ENCODE measurements at regions of chr1 and their contacts with region 1.

Region 1: GRCh38 chr1:205983925-205984725 is 19.1 kb downstream of the RAB7B start:
- DNase-seq: peak; percentile 97
- H3K4me3 Mint-ChIP-seq: no peak overlapping the region
- H3K27ac Mint-ChIP-seq: peak overlapping the region; percentile 40
- H3K4me1 Mint-ChIP-seq: peaks cover 23% of the 10 kb centered on the region
- H3K27me3 Mint-ChIP-seq: no peaks in the 10 kb centered on the region
- CTCF ChIP-seq: peak; percentile 99

Region 2: DNA sequence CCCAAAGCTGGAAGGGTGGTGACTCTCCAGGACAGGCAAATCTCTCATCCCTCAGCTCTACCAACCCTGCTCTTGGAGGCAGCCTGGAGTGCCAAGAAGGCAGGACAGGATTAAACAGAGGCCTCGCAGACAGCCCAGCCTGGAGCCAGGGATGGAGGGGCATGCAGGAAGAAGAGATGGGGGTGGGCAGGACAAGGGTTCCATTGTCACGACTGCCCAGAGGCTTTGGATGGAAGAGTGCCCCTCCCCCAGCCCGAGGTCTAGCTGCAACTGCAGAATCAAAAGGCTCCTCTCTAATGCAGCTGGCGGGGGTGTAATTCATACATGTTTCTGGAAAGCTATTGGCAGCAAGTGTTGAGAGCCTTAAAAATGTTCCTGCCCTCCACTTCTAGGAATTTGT is 10.2 kb after region 1 on chr1:
- CTCF ChIA-PET with region 1: interaction called, 65 read pairs
- POLR2A ChIA-PET with region 1: interaction called, 89 read pairs
- intact Hi-C with region 1: no loop called
- DNase-seq: no peak
- H3K4me3 Mint-ChIP-seq: no peak overlapping the region
- H3K27ac Mint-ChIP-seq: no peak overlapping the region
- H3K4me1 Mint-ChIP-seq: peaks cover 8% of the 10 kb centered on the region
- H3K27me3 Mint-ChIP-seq: no peaks in the 10 kb centered on the region
- CTCF ChIP-seq: no peak

Region 3: GRCh38 chr1:206001476-206001888 is 17.4 kb after region 1 on chr1:
- CTCF ChIA-PET with region 1: interaction called, 65 read pairs
- POLR2A ChIA-PET with region 1: interaction called, 89 read pairs
- intact Hi-C with region 1: no loop called
- DNase-seq: peak; percentile 99
- H3K4me3 Mint-ChIP-seq: peak overlapping the region; percentile 69
- H3K27ac Mint-ChIP-seq: peak overlapping the region; percentile 75
- H3K4me1 Mint-ChIP-seq: peaks cover 37% of the 10 kb centered on the region
- H3K27me3 Mint-ChIP-seq: no peaks in the 10 kb centered on the region
- CTCF ChIP-seq: no peak

Region 4: GRCh38 chr1:206023695-206024094 is 39.6 kb after region 1 on chr1 and contains the start of gene CTSE:
- CTCF ChIA-PET with region 1: interaction called, 81 read pairs
- POLR2A ChIA-PET with region 1: interaction called, 5 read pairs
- intact Hi-C with region 1: no loop called
- DNase-seq: no peak
- H3K4me3 Mint-ChIP-seq: no peak within 1 kb of the TSS
- H3K27ac Mint-ChIP-seq: no peak within 1 kb of the TSS
- H3K4me1 Mint-ChIP-seq: peaks cover 31% of the 10 kb centered on the region
- H3K27me3 Mint-ChIP-seq: no peaks in the 10 kb centered on the region
- CTCF ChIP-seq: no peak
- total RNA-seq, gene CTSE: 0.79 and 0.81 TPM in 2 replicates

Measured in MCF 10A (cell line).